ENCODE measurements at regions of chr10 and their contacts with region 1.

Region 1: GRCh38 chr10:74151056-74151878 is at the start of gene ADK:
- DNase-seq: peak; percentile 100
- ATAC-seq: peak; percentile 94 to 99 (median 94)
- H3K4me3 ChIP-seq: peak within 1 kb of the TSS; percentile 97
- H3K4me3 Mint-ChIP-seq: no peak within 1 kb of the TSS
- H3K27ac ChIP-seq: peak within 1 kb of the TSS; percentile 93
- H3K27ac Mint-ChIP-seq: no peak within 1 kb of the TSS
- H3K4me1 ChIP-seq: peaks cover 18% of the 10 kb centered on the region
- H3K4me1 Mint-ChIP-seq: peaks cover 10 to 17% of the 10 kb centered on the region in 2 donors
- H3K27me3 ChIP-seq: no peaks in the 10 kb centered on the region
- H3K27me3 Mint-ChIP-seq: no peaks in the 10 kb centered on the region
- CTCF ChIP-seq: peak; percentile 49
- total RNA-seq, gene ADK: 13.4 to 16.1 (median 14.1) TPM

Region 2: GRCh38 chr10:73886085-73886529 is 265.2 kb before region 1 on chr10:
- intact Hi-C with region 1: loop called (anchors 5 kb)
- DNase-seq: peak; percentile 65 to 85
- ATAC-seq: peak; percentile 91 to 99 (median 99)
- H3K4me3 ChIP-seq: no peak overlapping the region
- H3K4me3 Mint-ChIP-seq: no peak overlapping the region
- H3K27ac ChIP-seq: no peak overlapping the region
- H3K27ac Mint-ChIP-seq: no peak overlapping the region
- H3K4me1 ChIP-seq: peaks cover 6% of the 10 kb centered on the region
- H3K4me1 Mint-ChIP-seq: peaks cover 7 to 11% of the 10 kb centered on the region in 2 donors
- H3K27me3 ChIP-seq: no peaks in the 10 kb centered on the region
- H3K27me3 Mint-ChIP-seq: no peaks in the 10 kb centered on the region
- CTCF ChIP-seq: peak; percentile 87

Region 3: GRCh38 chr10:73997787-73998622 is 153.3 kb before region 1 on chr10 and contains the start of gene VCL:
- intact Hi-C with region 1: loop called (anchors 5 kb)
- DNase-seq: peak; percentile 95 to 97
- ATAC-seq: peak; percentile 93 to 99 (median 96)
- H3K4me3 ChIP-seq: peak within 1 kb of the TSS; percentile 78
- H3K4me3 Mint-ChIP-seq: peak within 1 kb of the TSS; percentile 97
- H3K27ac ChIP-seq: peak within 1 kb of the TSS; percentile 70
- H3K27ac Mint-ChIP-seq: peak within 1 kb of the TSS; percentile 88 to 94
- H3K4me1 ChIP-seq: peaks cover 23% of the 10 kb centered on the region
- H3K4me1 Mint-ChIP-seq: peaks cover 51 to 68% of the 10 kb centered on the region in 2 donors
- H3K27me3 ChIP-seq: no peaks in the 10 kb centered on the region
- H3K27me3 Mint-ChIP-seq: no peaks in the 10 kb centered on the region
- CTCF ChIP-seq: no peak
- total RNA-seq, gene VCL: 121 to 145 (median 122) TPM

Region 4: GRCh38 chr10:74176380-74177139 is 25.3 kb after region 1 on chr10:
- intact Hi-C with region 1: loop called (anchors 1 kb)
- DNase-seq: peak; percentile 92 to 98
- ATAC-seq: peak; percentile 92 to 99 (median 95)
- H3K4me3 ChIP-seq: peak overlapping the region; percentile 80
- H3K4me3 Mint-ChIP-seq: peak overlapping the region; percentile 97
- H3K27ac ChIP-seq: peak overlapping the region; percentile 84
- H3K27ac Mint-ChIP-seq: peak overlapping the region; percentile 91 to 95
- H3K4me1 ChIP-seq: peaks cover 14% of the 10 kb centered on the region
- H3K4me1 Mint-ChIP-seq: peaks cover 15 to 32% of the 10 kb centered on the region in 2 donors
- H3K27me3 ChIP-seq: no peaks in the 10 kb centered on the region
- H3K27me3 Mint-ChIP-seq: no peaks in the 10 kb centered on the region
- CTCF ChIP-seq: no peak

Region 5: GRCh38 chr10:74213571-74214162 is 62.4 kb after region 1 on chr10:
- intact Hi-C with region 1: loop called (anchors 2 kb)
- DNase-seq: peak in 1 of 2 donors; percentile 72
- ATAC-seq: peak in 1 of 3 donors; percentile 49
- H3K4me3 ChIP-seq: no peak overlapping the region
- H3K4me3 Mint-ChIP-seq: no peak overlapping the region
- H3K27ac ChIP-seq: no peak overlapping the region
- H3K27ac Mint-ChIP-seq: no peak overlapping the region
- H3K4me1 ChIP-seq: no peaks in the 10 kb centered on the region
- H3K4me1 Mint-ChIP-seq: peaks cover 0 to 4% of the 10 kb centered on the region in 2 donors
- H3K27me3 ChIP-seq: no peaks in the 10 kb centered on the region
- H3K27me3 Mint-ChIP-seq: no peaks in the 10 kb centered on the region
- CTCF ChIP-seq: peak; percentile 40

Region 6: GRCh38 chr10:75111367-75111906 is 960.2 kb after region 1 on chr10 and contains the start of gene SAMD8:
- intact Hi-C with region 1: loop called (anchors 2 kb)
- DNase-seq: peak; percentile 91 to 98
- ATAC-seq: peak; percentile 80 to 90 (median 86)
- H3K4me3 ChIP-seq: peak within 1 kb of the TSS; percentile 88
- H3K4me3 Mint-ChIP-seq: peak within 1 kb of the TSS; percentile 98
- H3K27ac ChIP-seq: peak within 1 kb of the TSS; percentile 95
- H3K27ac Mint-ChIP-seq: peak within 1 kb of the TSS; percentile 83 to 94
- H3K4me1 ChIP-seq: peaks cover 21% of the 10 kb centered on the region
- H3K4me1 Mint-ChIP-seq: peaks cover 31 to 37% of the 10 kb centered on the region in 2 donors
- H3K27me3 ChIP-seq: no peaks in the 10 kb centered on the region
- H3K27me3 Mint-ChIP-seq: no peaks in the 10 kb centered on the region
- CTCF ChIP-seq: no peak
- total RNA-seq, gene SAMD8: 26.6 to 30.9 (median 29.6) TPM